Common myeloid progenitor, CD34-positive (primary cell): ENCODE measurements at regions of chr1 and their contacts with region 1.

Region 1: GRCh38 chr1:47211796-47212269 is 20.2 kb downstream of the TAL1 start:
- DNase-seq: peak; percentile 67 to 77 (median 73)
- H3K4me3 ChIP-seq: peak overlapping the region in 5 of 7 experiments; percentile 46 to 67 (median 57)
- H3K27ac ChIP-seq: peak overlapping the region; percentile 85 to 88
- H3K4me1 ChIP-seq: peaks cover 6 to 65% (median 54%) of the 10 kb centered on the region in 4 experiments
- H3K27me3 ChIP-seq: no peaks in the 10 kb centered on the region

Region 2: DNA sequence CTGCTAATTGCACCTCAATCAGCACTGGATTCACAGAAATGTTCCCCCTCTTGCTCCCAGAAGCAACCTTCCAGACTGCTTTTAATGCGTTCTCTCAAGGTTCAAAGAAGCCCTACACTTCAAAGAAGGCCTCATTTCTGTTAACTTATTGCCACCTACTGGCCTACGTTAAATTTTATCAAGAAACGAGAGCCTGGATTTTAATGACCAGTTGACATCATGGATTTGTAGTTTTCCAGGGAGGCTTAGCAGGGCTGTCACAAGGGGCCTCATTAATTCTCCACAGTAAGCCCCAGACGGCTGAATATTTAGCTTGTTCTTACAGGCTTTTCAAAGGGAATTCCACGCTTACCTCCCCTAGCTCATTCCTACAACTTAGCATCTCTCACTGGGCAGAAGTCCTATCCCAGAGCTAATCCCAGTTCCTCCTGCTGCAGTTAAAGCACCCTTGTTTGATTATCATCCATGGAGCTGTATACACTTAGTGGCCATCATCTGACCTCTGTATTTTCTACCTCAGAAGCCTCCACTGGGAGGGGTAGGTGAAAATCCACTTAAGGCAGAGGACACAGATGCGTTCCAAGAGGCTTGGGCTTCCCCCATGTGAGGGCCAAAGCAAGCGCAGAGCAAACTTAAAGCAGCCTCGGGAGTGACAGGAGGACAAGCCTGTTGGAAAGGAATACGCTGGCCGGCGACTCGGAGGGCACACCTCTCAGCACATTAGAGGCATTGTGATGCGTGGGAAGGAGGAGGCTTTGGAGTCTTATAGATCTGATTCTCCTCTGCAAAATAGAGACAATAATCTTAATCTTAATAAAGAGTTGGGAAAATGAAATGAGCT is 220.5 kb before region 1 on chr1:
- CTCF ChIA-PET with region 1: no interaction called
- POLR2A ChIA-PET with region 1: no interaction called
- DNase-seq: peak in 2 of 3 donors; percentile 3 to 14
- H3K4me3 ChIP-seq: no peak overlapping the region
- H3K27ac ChIP-seq: no peak overlapping the region
- H3K4me1 ChIP-seq: no peaks in the 10 kb centered on the region
- H3K27me3 ChIP-seq: peaks cover 0 to 3% (median 0%) of the 10 kb centered on the region in 5 experiments

Region 3: DNA sequence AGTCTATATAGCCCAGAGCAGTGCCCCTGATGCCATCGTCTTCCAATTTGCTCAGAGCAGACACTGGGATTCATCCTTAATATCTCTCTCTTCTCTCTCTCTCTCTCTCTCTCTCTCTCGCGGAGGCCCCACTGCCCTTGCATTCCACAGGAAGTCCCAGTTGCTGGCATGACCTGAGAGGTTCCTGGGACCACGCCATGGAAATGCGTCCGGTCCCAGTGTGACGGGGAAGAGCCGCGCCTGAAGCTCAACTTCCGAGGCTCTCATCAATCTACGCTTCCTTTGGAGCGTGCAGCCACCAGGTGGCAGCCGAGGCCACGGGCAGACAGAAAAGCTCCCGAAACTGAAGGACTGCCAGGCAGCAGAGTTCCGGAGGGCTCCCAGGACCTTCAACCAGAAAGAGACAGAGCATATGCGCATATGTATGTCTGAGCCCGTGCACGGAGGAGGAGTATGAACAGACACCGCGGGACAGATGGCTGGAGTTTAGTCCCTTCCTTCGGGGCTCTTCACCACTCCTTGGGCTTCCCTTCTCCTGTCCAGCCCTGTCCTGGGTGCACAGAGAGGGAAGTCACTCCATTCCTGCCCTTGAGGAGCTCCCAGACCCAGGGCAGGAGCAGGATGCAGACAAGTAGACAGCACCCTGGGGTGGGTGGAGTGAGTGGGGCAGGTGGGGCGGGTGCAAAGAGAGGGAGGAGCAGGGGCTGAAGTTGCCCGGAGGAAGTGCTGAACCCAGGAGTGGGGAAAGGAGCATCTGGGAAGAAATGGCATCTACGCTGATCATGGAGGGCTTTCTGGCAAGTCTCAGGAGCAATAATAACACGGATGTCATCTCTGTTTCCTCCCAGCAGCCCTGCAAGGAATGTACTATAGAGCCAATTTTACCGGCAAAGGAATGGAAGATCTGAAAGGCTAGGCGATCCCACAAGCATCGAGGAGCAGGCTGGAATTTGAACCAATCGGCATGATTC is 32.5 kb before region 1 on chr1:
- CTCF ChIA-PET with region 1: interaction called, 19 read pairs
- POLR2A ChIA-PET with region 1: no interaction called
- DNase-seq: peak; percentile 89 to 94 (median 91)
- H3K4me3 ChIP-seq: peak overlapping the region; percentile 24 to 84 (median 69)
- H3K27ac ChIP-seq: peak overlapping the region in 1 of 2 experiments; percentile 51
- H3K4me1 ChIP-seq: peaks cover 4 to 57% (median 45%) of the 10 kb centered on the region in 4 experiments
- H3K27me3 ChIP-seq: no peaks in the 10 kb centered on the region

Region 4: DNA sequence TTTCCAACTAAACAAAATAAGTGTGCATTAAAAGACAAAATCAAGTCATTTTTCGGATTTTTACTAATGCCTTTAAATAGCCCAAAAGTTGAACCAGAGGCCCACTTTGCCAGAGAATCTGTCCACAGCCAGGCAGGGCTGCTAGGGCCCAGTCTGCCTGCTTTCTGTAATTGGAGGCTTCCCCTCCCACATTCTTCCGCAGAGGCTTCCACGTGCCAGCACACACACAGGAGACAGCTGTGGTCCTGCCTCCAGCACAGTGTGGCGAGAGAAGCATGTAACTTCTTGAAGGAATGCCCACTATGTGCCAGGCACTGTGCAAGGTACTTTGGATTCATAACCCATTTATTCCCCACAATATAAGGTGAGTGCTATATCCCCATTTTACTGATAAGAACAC is 10.7 kb before region 1 on chr1:
- CTCF ChIA-PET with region 1: interaction called, 15 read pairs
- POLR2A ChIA-PET with region 1: interaction called, 4 read pairs
- DNase-seq: peak in 1 of 3 donors; percentile 49
- H3K4me3 ChIP-seq: no peak overlapping the region
- H3K27ac ChIP-seq: no peak overlapping the region
- H3K4me1 ChIP-seq: peaks cover 0 to 18% (median 3%) of the 10 kb centered on the region in 4 experiments
- H3K27me3 ChIP-seq: no peaks in the 10 kb centered on the region

Region 5: GRCh38 chr1:47225430-47226100 is 13.7 kb after region 1 on chr1:
- CTCF ChIA-PET with region 1: interaction called, 30 read pairs
- POLR2A ChIA-PET with region 1: interaction called, 21 read pairs
- DNase-seq: peak in 2 of 3 donors; percentile 46 to 52
- H3K4me3 ChIP-seq: peak overlapping the region; percentile 25 to 85 (median 67)
- H3K27ac ChIP-seq: peak overlapping the region in 1 of 2 experiments; percentile 97
- H3K4me1 ChIP-seq: peaks cover 0 to 68% (median 57%) of the 10 kb centered on the region in 4 experiments
- H3K27me3 ChIP-seq: no peaks in the 10 kb centered on the region